Uterus (tissue), 4 donors: ENCODE measurements at regions of chr13 and their contacts with region 1.

Region 1: GRCh38 chr13:30443957-30444404 is 21.7 kb downstream of the UBE2L5 start:
- DNase-seq: no peak
- H3K4me3 ChIP-seq: no peak overlapping the region
- H3K27ac ChIP-seq: no peak overlapping the region
- H3K4me1 ChIP-seq: no peaks in the 10 kb centered on the region
- H3K27me3 ChIP-seq: no peaks in the 10 kb centered on the region
- CTCF ChIP-seq: no peak
- POLR2A ChIP-seq: no peak

Region 2: GRCh38 chr13:30395192-30396084 is 48.5 kb before region 1 on chr13:
- intact Hi-C with region 1: loop called (anchors 10 kb)
- DNase-seq: peak; percentile 95 to 97
- H3K4me3 ChIP-seq: peak overlapping the region; percentile 39
- H3K27ac ChIP-seq: peak overlapping the region; percentile 93 to 97
- H3K4me1 ChIP-seq: no peaks in the 10 kb centered on the region
- H3K27me3 ChIP-seq: no peaks in the 10 kb centered on the region
- CTCF ChIP-seq: no peak
- POLR2A ChIP-seq: peak; percentile 29 to 52

Region 3: GRCh38 chr13:30654430-30654829 is 210.4 kb after region 1 on chr13:
- intact Hi-C with region 1: no loop called
- DNase-seq: no peak
- H3K4me3 ChIP-seq: no peak overlapping the region
- H3K27ac ChIP-seq: no peak overlapping the region
- H3K4me1 ChIP-seq: no peaks in the 10 kb centered on the region
- H3K27me3 ChIP-seq: no peaks in the 10 kb centered on the region
- CTCF ChIP-seq: no peak
- POLR2A ChIP-seq: no peak